Calu3 (cell line): ENCODE measurements at regions of chr1 and their contacts with region 1.

Region 1: GRCh38 chr1:234823191-234824176 is 213.5 kb upstream of the IRF2BP2 start:
- DNase-seq: no peak
- H3K4me3 Mint-ChIP-seq: no peak overlapping the region
- H3K27ac Mint-ChIP-seq: no peak overlapping the region
- H3K4me1 Mint-ChIP-seq: peaks cover 20% of the 10 kb centered on the region
- H3K27me3 Mint-ChIP-seq: no peaks in the 10 kb centered on the region
- CTCF ChIP-seq: no peak

Region 2: DNA sequence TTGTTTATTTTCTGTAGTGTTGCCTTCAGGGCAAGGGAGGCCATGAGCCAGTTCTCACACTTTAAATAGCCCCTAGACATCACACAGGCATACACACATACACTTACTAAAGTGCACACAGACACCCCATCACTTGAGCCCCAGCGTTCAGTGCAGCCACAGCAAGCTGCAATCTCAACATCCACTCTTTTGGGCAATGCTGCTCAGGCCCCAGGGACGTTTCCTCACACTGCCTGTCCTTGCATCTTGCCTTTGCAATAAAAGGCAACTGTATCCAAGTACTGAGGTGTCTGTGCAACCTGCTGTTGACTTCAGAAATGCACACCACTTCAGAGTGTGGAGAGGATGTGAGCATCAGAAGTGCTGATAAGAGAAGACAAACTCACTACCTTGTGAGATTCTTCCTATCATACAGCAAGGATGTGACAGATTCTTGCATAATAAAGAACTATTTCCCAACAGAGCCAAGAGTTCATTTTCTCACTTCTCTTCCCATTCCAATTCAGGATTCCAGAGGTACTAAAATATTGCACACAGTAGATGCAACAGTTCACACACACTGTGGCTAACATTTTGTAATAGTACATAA is 249.7 kb before region 1 on chr1:
- CTCF ChIA-PET with region 1: no interaction called
- intact Hi-C with region 1: no loop called
- DNase-seq: no peak
- H3K4me3 Mint-ChIP-seq: no peak overlapping the region
- H3K27ac Mint-ChIP-seq: no peak overlapping the region
- H3K4me1 Mint-ChIP-seq: no peaks in the 10 kb centered on the region
- H3K27me3 Mint-ChIP-seq: no peaks in the 10 kb centered on the region
- CTCF ChIP-seq: no peak

Region 3: DNA sequence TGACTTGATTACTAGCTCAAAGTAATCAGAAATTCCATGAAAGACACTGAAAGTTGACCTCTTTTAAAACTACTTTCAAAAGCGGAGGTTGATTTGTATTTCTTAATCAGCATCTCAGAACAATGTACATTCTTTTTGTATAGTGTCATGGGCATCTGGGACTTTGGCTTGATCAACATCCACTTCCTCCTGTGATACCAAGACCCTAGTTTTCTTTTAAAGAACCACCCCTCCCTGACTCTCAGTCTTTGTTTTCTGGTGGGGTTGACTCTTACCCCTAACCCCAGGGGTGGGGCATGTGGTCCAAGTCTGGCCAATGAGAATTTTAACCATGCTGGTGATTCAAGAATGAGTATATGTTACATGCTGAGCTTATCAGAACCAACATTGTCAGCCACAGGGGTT is 191.8 kb before region 1 on chr1:
- CTCF ChIA-PET with region 1: no interaction called
- intact Hi-C with region 1: loop called (anchors 10 kb)
- DNase-seq: peak; percentile 88
- H3K4me3 Mint-ChIP-seq: no peak overlapping the region
- H3K27ac Mint-ChIP-seq: peak overlapping the region; percentile 96
- H3K4me1 Mint-ChIP-seq: peaks cover 44% of the 10 kb centered on the region
- H3K27me3 Mint-ChIP-seq: no peaks in the 10 kb centered on the region
- CTCF ChIP-seq: no peak

Region 4: DNA sequence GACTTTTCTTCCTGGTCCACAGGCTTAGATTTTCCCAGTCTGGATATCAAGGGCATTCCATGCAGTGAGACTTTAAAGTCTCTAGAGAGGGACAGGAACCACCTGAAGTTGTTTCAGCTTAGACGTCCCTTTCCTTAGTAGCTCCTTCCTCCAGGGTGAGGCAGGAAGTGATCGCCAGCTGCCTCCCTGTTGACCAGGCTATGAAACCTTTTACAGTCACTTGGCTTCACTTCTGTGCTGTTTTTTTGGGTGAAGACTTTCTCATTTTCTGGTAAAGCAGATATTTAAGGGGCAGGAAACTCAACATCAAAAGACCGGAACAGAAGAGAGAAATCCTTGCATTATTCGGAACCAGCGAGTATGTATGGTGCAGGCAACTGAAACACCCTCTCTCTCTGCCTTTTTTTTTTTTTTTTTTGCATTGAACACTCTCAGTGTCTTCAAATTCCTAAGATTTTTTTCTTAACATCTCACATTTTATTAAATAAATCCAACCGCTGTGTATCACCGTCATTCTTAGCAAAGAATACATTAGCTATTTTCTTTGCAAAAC is 21.1 kb after region 1 on chr1:
- CTCF ChIA-PET with region 1: no interaction called
- intact Hi-C with region 1: loop called (anchors 1 kb)
- DNase-seq: no peak
- H3K4me3 Mint-ChIP-seq: no peak overlapping the region
- H3K27ac Mint-ChIP-seq: no peak overlapping the region
- H3K4me1 Mint-ChIP-seq: peaks cover 20% of the 10 kb centered on the region
- H3K27me3 Mint-ChIP-seq: no peaks in the 10 kb centered on the region
- CTCF ChIP-seq: no peak

Region 5: GRCh38 chr1:234918181-234918841 is 94.8 kb after region 1 on chr1:
- CTCF ChIA-PET with region 1: no interaction called
- intact Hi-C with region 1: no loop called
- DNase-seq: no peak
- H3K4me3 Mint-ChIP-seq: no peak overlapping the region
- H3K27ac Mint-ChIP-seq: no peak overlapping the region
- H3K4me1 Mint-ChIP-seq: peaks cover 8% of the 10 kb centered on the region
- H3K27me3 Mint-ChIP-seq: no peaks in the 10 kb centered on the region
- CTCF ChIP-seq: no peak